Common myeloid progenitor, CD34-positive (primary cell): ENCODE measurements at regions of chr6 and their contacts with region 1.

Region 1: GRCh38 chr6:24910961-24911712 is 24.6 kb downstream of the RIPOR2 start:
- DNase-seq: peak; percentile 55 to 85 (median 78)
- H3K4me3 ChIP-seq: peak overlapping the region; percentile 23 to 82 (median 65)
- H3K27ac ChIP-seq: no peak overlapping the region
- H3K4me1 ChIP-seq: peaks cover 12 to 48% (median 39%) of the 10 kb centered on the region in 4 experiments
- H3K27me3 ChIP-seq: no peaks in the 10 kb centered on the region

Region 2: GRCh38 chr6:24513602-24514001 is 397.5 kb before region 1 on chr6:
- CTCF ChIA-PET with region 1: no interaction called
- POLR2A ChIA-PET with region 1: no interaction called
- DNase-seq: no peak
- H3K4me3 ChIP-seq: no peak overlapping the region
- H3K27ac ChIP-seq: no peak overlapping the region
- H3K4me1 ChIP-seq: no peaks in the 10 kb centered on the region
- H3K27me3 ChIP-seq: no peaks in the 10 kb centered on the region

Region 3: GRCh38 chr6:24689964-24690363 is 221.2 kb before region 1 on chr6:
- CTCF ChIA-PET with region 1: no interaction called
- POLR2A ChIA-PET with region 1: no interaction called
- DNase-seq: no peak
- H3K4me3 ChIP-seq: no peak overlapping the region
- H3K27ac ChIP-seq: no peak overlapping the region
- H3K4me1 ChIP-seq: no peaks in the 10 kb centered on the region
- H3K27me3 ChIP-seq: no peaks in the 10 kb centered on the region

Region 4: GRCh38 chr6:24831771-24832716 is 79.1 kb before region 1 on chr6:
- CTCF ChIA-PET with region 1: no interaction called
- POLR2A ChIA-PET with region 1: no interaction called
- DNase-seq: no peak
- H3K4me3 ChIP-seq: no peak overlapping the region
- H3K27ac ChIP-seq: no peak overlapping the region
- H3K4me1 ChIP-seq: no peaks in the 10 kb centered on the region
- H3K27me3 ChIP-seq: no peaks in the 10 kb centered on the region

Region 5: GRCh38 chr6:24876499-24877465 is 34.4 kb before region 1 on chr6:
- CTCF ChIA-PET with region 1: no interaction called
- POLR2A ChIA-PET with region 1: no interaction called
- DNase-seq: no peak
- H3K4me3 ChIP-seq: no peak overlapping the region
- H3K27ac ChIP-seq: no peak overlapping the region
- H3K4me1 ChIP-seq: no peaks in the 10 kb centered on the region
- H3K27me3 ChIP-seq: no peaks in the 10 kb centered on the region

Region 6: GRCh38 chr6:24888715-24889370 is 22.3 kb before region 1 on chr6:
- CTCF ChIA-PET with region 1: interaction called, 12 read pairs
- POLR2A ChIA-PET with region 1: no interaction called
- DNase-seq: no peak
- H3K4me3 ChIP-seq: no peak overlapping the region
- H3K27ac ChIP-seq: no peak overlapping the region
- H3K4me1 ChIP-seq: peaks cover 0 to 2% (median 0%) of the 10 kb centered on the region in 4 experiments
- H3K27me3 ChIP-seq: no peaks in the 10 kb centered on the region

Region 7: DNA sequence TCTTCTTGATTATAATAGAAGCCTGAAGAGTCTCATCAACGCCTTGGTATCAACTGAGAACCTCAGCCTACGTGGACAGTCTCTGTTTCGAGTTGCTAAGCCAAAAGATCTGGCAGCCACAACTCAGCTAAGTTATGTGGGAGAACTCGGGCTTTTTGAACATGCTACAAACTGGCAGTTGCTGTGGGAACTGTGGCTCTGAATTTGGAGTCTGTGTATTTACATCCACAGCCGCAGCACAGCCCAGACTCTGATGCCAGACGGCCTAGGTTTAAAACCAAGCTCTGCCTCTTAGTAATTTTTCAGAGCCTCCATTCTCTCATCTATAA is 11.2 kb before region 1 on chr6:
- CTCF ChIA-PET with region 1: interaction called, 23 read pairs
- POLR2A ChIA-PET with region 1: interaction called, 4 read pairs
- DNase-seq: peak in 2 of 3 donors; percentile 25 to 51
- H3K4me3 ChIP-seq: peak overlapping the region in 1 of 7 experiments; percentile 8
- H3K27ac ChIP-seq: peak overlapping the region in 1 of 2 experiments; percentile 47
- H3K4me1 ChIP-seq: peaks cover 0 to 18% (median 2%) of the 10 kb centered on the region in 4 experiments
- H3K27me3 ChIP-seq: no peaks in the 10 kb centered on the region